Caco-2 (cell line): ENCODE measurements at regions of chr11 and their contacts with region 1.

Region 1: GRCh38 chr11:64252003-64252872 is 908 bp downstream of the PLCB3 start:
- DNase-seq: peak; percentile 77 to 84
- H3K4me3 ChIP-seq: peak overlapping the region; percentile 66
- H3K4me3 Mint-ChIP-seq: peak overlapping the region; percentile 99
- H3K27ac Mint-ChIP-seq: peak overlapping the region; percentile 85
- H3K4me1 ChIP-seq: peaks cover 26% of the 10 kb centered on the region
- H3K4me1 Mint-ChIP-seq: peaks cover 13% of the 10 kb centered on the region
- H3K27me3 ChIP-seq: no peaks in the 10 kb centered on the region
- H3K27me3 Mint-ChIP-seq: no peaks in the 10 kb centered on the region
- CTCF ChIP-seq: peak; percentile 36 to 48

Region 2: DNA sequence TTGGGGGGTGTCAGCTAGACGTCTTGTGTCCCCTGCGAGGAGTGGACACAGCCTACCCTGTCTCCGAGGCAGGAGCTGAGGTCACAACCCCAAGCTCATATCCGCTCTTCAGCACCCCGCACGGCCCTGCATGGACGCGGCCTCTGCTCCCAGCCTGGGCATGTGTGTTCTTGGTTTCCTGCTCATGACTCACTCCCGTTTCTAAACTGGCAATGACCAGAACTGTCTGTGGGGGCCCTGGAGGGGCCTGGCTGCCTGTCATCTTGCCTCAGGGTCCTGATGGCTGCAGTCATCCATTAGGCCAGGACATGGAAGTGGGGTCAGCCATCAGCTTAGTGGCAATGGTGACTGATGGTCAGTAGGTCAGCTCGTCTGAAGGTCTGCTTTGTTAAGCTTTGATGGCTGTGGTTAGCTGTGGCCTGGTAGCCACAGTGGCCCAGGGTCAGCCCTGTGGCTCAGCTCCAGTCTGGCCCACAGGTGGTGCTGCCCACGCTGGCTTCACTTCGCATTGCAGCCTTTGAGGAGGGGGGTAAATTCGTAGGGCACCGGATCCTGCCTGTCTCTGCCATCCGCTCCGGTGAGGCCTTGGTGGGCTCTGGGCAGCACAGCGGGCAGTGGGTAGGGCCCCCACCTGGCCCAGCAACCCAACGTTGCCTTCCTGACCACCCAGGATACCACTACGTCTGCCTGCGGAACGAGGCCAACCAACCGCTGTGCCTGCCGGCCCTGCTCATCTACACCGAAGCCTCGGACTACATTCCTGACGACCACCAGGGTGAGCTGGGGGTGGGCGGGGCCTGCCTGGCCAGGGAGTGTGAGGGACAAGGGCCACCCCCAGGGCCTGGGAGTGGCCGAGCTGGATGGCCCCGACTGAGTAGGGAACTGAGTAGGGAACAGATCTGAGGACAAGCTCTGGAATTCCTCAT is 11.0 kb after region 1 on chr11:
- CTCF ChIA-PET with region 1: interaction called, 13 read pairs
- POLR2A ChIA-PET with region 1: interaction called, 22 read pairs
- intact Hi-C with region 1: no loop called
- DNase-seq: peak in 1 of 2 experiments; percentile 28
- H3K4me3 ChIP-seq: no peak overlapping the region
- H3K4me3 Mint-ChIP-seq: no peak overlapping the region
- H3K27ac Mint-ChIP-seq: no peak overlapping the region
- H3K4me1 ChIP-seq: peaks cover 7% of the 10 kb centered on the region
- H3K4me1 Mint-ChIP-seq: peaks cover 16% of the 10 kb centered on the region
- H3K27me3 ChIP-seq: no peaks in the 10 kb centered on the region
- H3K27me3 Mint-ChIP-seq: no peaks in the 10 kb centered on the region
- CTCF ChIP-seq: no peak